ENCODE measurements at regions of chr5 and their contacts with region 1.

Region 1: DNA sequence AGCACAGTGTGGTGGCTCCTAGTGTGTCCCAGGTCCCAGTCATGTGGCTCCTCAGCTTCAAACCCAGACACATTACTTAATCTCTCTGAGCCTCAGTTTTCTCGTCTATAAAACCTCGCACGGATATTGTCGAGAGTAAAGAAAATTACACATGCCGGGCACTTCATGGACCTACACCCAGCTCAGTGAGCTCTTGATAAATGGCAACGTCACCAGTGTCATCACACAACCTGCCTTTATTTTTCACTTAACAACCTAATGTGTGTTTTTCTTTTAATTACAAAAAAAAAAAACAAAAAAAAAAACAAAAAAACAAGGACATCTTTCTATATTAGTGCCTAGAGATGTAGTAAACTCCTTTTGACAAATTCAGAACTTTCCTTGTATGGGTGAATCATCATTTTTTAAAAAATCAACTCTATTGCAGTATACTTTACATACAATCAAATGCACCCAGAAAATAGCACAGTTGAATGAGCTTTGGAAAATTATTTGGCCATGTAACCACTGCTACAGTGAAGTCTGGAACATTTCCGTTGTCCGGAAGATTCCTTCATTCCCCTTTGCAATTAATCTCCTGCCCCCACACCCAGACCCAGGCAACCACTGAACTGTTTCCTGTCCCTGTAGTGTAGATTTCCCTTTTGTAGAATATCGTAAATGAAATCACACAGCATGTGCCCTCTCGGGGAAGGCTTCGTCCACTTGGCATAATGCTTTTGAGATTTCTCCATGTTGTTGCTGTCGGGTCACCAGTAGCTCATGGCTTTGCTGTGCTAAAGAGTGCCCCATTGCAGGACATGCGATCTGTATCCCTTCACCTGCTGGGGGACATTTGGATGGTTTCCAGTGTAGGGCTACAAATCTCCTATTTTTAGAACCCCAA is 100.4 kb upstream of the LARP1 start:
- DNase-seq: no peak
- H3K4me3 Mint-ChIP-seq: no peak overlapping the region
- H3K27ac Mint-ChIP-seq: no peak overlapping the region
- H3K4me1 Mint-ChIP-seq: peaks cover 7% of the 10 kb centered on the region
- H3K27me3 Mint-ChIP-seq: no peaks in the 10 kb centered on the region

Region 2: DNA sequence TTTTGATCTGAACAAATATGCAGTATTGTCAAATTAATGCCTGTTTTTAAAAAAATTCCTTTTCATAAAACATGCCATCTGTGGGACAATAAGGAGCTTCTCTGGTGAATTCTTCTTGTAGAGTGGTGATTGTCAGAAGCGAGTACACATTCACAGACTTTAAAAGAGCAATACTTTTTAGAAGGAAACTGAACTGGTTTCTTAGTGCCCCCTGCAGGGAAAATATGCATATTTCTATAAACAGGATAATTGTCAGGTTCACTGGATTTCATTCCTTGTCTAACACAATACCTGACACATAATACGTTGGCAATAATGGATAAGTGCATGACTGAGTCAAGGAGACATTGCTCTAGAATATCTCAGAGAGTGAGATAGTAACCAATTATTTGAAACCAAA is 492.5 kb after region 1 on chr5:
- CTCF ChIA-PET with region 1: no interaction called
- POLR2A ChIA-PET with region 1: no interaction called
- intact Hi-C with region 1: loop called (anchors 10 kb)
- DNase-seq: no peak
- H3K4me3 Mint-ChIP-seq: no peak overlapping the region
- H3K27ac Mint-ChIP-seq: no peak overlapping the region
- H3K4me1 Mint-ChIP-seq: no peaks in the 10 kb centered on the region
- H3K27me3 Mint-ChIP-seq: peaks cover 4% of the 10 kb centered on the region

Measured in activated CD4-positive, alpha-beta memory T cell treated with anti-CD3 and anti-CD28 coated beads for 36 hours (primary cell).